ENCODE measurements at regions of chr14 and their contacts with region 1.

Region 1: GRCh38 chr14:22386924-22387775 is 201.9 kb downstream of the DAD1 start:
- DNase-seq: peak; percentile 77
- ATAC-seq: peak; percentile 18
- H3K4me3 ChIP-seq: no peak overlapping the region
- H3K27ac ChIP-seq: no peak overlapping the region
- H3K4me1 ChIP-seq: peaks cover 69% of the 10 kb centered on the region
- H3K27me3 ChIP-seq: no peaks in the 10 kb centered on the region
- CTCF ChIP-seq: peak; percentile 67 to 87 (median 79)
- EP300 ChIP-seq: no peak
- POLR2A ChIP-seq: no peak
- RAD21 ChIP-seq: peak; percentile 98

Region 2: DNA sequence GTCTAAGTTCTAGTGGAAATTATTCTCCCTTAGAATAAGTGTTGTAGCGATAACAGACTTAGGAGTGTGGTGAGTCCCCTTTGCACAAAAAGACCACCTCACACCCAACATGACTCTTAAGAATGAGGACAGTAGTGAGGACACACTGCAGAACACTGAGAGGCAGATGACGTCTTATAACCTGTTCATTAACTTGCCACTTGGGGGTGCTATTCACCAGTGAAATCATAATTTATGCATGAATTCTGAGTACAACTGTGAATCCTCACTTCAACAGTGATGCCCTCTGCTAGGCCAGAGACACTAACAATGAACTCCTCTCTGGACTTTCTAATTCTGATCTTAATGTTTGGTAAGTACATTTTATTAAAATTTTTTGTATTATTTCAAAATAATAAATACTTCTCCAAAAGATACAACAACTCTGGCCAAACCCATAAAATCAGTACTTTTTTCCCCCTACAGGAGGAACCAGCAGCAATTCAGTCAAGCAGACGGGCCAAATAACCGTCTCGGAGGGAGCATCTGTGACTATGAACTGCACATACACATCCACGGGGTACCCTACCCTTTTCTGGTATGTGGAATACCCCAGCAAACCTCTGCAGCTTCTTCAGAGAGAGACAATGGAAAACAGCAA is 72.8 kb before region 1 on chr14:
- CTCF ChIA-PET with region 1: interaction called, 103 read pairs
- POLR2A ChIA-PET with region 1: interaction called, 3 read pairs
- RAD21 ChIA-PET with region 1: interaction called, 80 read pairs
- SMC1A ChIA-PET with region 1: interaction called, 59 read pairs
- in situ Hi-C with region 1: loop called (anchors 5 kb)
- intact Hi-C with region 1: no loop called
- DNase-seq: peak; percentile 48
- ATAC-seq: peak; percentile 98
- H3K4me3 ChIP-seq: no peak overlapping the region
- H3K27ac ChIP-seq: no peak overlapping the region
- H3K4me1 ChIP-seq: no peaks in the 10 kb centered on the region
- H3K27me3 ChIP-seq: no peaks in the 10 kb centered on the region
- CTCF ChIP-seq: peak; percentile 55 to 80 (median 69); a peak in 5 of 6 replicates
- EP300 ChIP-seq: no peak
- POLR2A ChIP-seq: no peak
- RAD21 ChIP-seq: peak; percentile 75

Region 3: GRCh38 chr14:22432348-22432976 is 45.3 kb after region 1 on chr14:
- CTCF ChIA-PET with region 1: interaction called, 33 read pairs
- POLR2A ChIA-PET with region 1: no interaction called
- RAD21 ChIA-PET with region 1: interaction called, 16 read pairs
- SMC1A ChIA-PET with region 1: interaction called, 33 read pairs
- in situ Hi-C with region 1: no loop called
- intact Hi-C with region 1: loop called (anchors 2 kb)
- DNase-seq: no peak
- ATAC-seq: peak; percentile 83
- H3K4me3 ChIP-seq: no peak overlapping the region
- H3K27ac ChIP-seq: no peak overlapping the region
- H3K4me1 ChIP-seq: peaks cover 19% of the 10 kb centered on the region
- H3K27me3 ChIP-seq: no peaks in the 10 kb centered on the region
- CTCF ChIP-seq: no peak
- EP300 ChIP-seq: no peak
- POLR2A ChIP-seq: no peak
- RAD21 ChIP-seq: no peak

Region 4: DNA sequence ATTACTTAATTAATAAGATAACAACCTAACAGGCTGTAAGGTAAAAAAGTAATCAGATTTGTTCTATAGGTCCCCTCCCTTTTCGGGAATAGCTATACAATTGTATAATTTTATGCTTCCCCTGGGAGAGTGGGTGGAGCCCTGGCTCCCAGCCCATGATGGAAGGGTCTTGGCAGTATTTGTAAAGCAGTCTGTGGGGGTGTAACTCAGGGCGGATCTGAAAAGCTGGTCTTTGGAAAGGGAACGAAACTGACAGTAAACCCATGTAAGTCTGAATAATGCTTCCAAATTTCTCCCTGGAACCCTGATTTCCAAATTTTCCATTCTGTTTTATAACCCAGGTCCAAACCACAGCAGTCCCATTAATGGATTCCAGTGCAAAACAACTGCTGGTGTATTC is 91.5 kb after region 1 on chr14:
- CTCF ChIA-PET with region 1: interaction called, 411 read pairs
- POLR2A ChIA-PET with region 1: interaction called, 73 read pairs
- RAD21 ChIA-PET with region 1: interaction called, 272 read pairs
- SMC1A ChIA-PET with region 1: interaction called, 912 read pairs
- in situ Hi-C with region 1: loop called (anchors 5 kb)
- intact Hi-C with region 1: loop called (anchors 1 kb)
- DNase-seq: no peak
- ATAC-seq: peak; percentile 5; the same call in 1 of the 3 replicates
- H3K4me3 ChIP-seq: peak overlapping the region; percentile 66; the same call in 1 of the 2 replicates
- H3K27ac ChIP-seq: peak overlapping the region; percentile 98
- H3K4me1 ChIP-seq: peaks cover 71% of the 10 kb centered on the region
- H3K27me3 ChIP-seq: no peaks in the 10 kb centered on the region
- CTCF ChIP-seq: no peak
- EP300 ChIP-seq: 0 out of 4 replicates have a peak, but pooled peaks of 1 of the 2 experiments have one; percentile 1
- POLR2A ChIP-seq: no peak
- RAD21 ChIP-seq: no peak

Region 5: DNA sequence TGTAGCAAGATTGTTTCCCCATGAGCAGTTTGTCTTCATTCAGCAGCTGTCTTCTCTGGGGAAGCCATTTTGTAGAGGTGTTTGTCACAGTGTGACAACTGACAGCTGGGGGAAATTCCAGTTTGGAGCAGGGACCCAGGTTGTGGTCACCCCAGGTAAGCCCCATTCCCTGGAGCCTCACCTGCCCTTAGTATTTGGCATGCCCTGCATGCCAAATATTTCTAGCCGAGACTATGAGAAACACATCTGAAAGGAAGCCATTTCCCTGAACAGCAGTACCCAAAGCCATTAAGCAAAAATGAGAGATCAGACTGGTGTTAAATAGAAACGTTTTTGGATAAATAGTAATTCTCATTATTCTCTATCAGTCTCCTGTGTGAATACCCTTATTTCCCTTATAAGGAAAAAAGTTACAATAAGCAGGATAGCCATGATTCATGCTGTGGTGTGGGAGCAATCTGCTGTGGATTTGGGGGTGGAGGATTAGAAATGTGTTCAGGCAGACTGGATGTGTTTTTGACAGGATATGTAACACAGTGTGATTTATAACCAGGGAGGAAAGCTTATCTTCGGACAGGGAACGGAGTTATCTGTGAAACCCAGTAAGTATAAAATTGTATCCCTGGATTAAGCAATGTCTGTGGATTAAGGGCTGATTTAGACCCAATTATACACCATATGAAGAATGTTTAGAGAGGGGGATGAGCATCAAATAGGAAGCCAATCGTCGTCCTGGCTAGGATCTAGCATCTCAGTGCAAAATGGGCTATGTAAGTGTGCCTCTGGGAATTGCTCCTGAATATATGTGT is 132.9 kb after region 1 on chr14:
- CTCF ChIA-PET with region 1: interaction called, 5 read pairs
- POLR2A ChIA-PET with region 1: interaction called, 3 read pairs
- RAD21 ChIA-PET with region 1: interaction called, 6 read pairs
- SMC1A ChIA-PET with region 1: interaction called, 11 read pairs
- in situ Hi-C with region 1: no loop called
- intact Hi-C with region 1: no loop called
- DNase-seq: no peak
- ATAC-seq: no peak
- H3K4me3 ChIP-seq: peak overlapping the region; percentile 15; the same call in 1 of the 2 replicates
- H3K27ac ChIP-seq: peak overlapping the region; percentile 80
- H3K4me1 ChIP-seq: peaks cover 99% of the 10 kb centered on the region
- H3K27me3 ChIP-seq: no peaks in the 10 kb centered on the region
- CTCF ChIP-seq: no peak
- EP300 ChIP-seq: no peak
- POLR2A ChIP-seq: no peak
- RAD21 ChIP-seq: no peak

Region 6: GRCh38 chr14:22614224-22614799 is 227.2 kb after region 1 on chr14:
- CTCF ChIA-PET with region 1: no interaction called
- POLR2A ChIA-PET with region 1: no interaction called
- RAD21 ChIA-PET with region 1: no interaction called
- SMC1A ChIA-PET with region 1: no interaction called
- in situ Hi-C with region 1: no loop called
- intact Hi-C with region 1: no loop called
- DNase-seq: no peak
- ATAC-seq: peak; percentile 41; the same call in 2 of the 3 replicates
- H3K4me3 ChIP-seq: no peak overlapping the region
- H3K27ac ChIP-seq: no peak overlapping the region
- H3K4me1 ChIP-seq: peaks cover 5% of the 10 kb centered on the region
- H3K27me3 ChIP-seq: no peaks in the 10 kb centered on the region
- CTCF ChIP-seq: no peak
- EP300 ChIP-seq: no peak
- POLR2A ChIP-seq: no peak
- RAD21 ChIP-seq: no peak

Region 7: GRCh38 chr14:22653012-22653621 is 266.0 kb after region 1 on chr14:
- CTCF ChIA-PET with region 1: interaction called, 6 read pairs
- POLR2A ChIA-PET with region 1: no interaction called
- RAD21 ChIA-PET with region 1: interaction called, 12 read pairs
- SMC1A ChIA-PET with region 1: interaction called, 22 read pairs
- in situ Hi-C with region 1: loop called (anchors 5 kb)
- intact Hi-C with region 1: loop called (anchors 5 kb)
- DNase-seq: no peak
- ATAC-seq: peak; percentile 89
- H3K4me3 ChIP-seq: no peak overlapping the region
- H3K27ac ChIP-seq: no peak overlapping the region
- H3K4me1 ChIP-seq: no peaks in the 10 kb centered on the region
- H3K27me3 ChIP-seq: no peaks in the 10 kb centered on the region
- CTCF ChIP-seq: peak; percentile 87 to 92 (median 88)
- EP300 ChIP-seq: no peak
- POLR2A ChIP-seq: no peak
- RAD21 ChIP-seq: peak; percentile 91

Measured in GM12878 (cell line).